ENCODE measurements at regions of chr1 and their contacts with region 1.

Region 1: GRCh38 chr1:62436466-62437256 is at the start of gene USP1:
- DNase-seq: peak; percentile 99
- ATAC-seq: peak; percentile 86
- H3K4me3 ChIP-seq: peak within 1 kb of the TSS; percentile 79
- H3K27ac ChIP-seq: peak within 1 kb of the TSS; percentile 99
- H3K4me1 ChIP-seq: peaks cover 14% of the 10 kb centered on the region
- H3K27me3 ChIP-seq: no peaks in the 10 kb centered on the region
- CTCF ChIP-seq: no peak
- total RNA-seq, gene USP1: 42.6 and 43.8 TPM in 2 replicates

Region 2: DNA sequence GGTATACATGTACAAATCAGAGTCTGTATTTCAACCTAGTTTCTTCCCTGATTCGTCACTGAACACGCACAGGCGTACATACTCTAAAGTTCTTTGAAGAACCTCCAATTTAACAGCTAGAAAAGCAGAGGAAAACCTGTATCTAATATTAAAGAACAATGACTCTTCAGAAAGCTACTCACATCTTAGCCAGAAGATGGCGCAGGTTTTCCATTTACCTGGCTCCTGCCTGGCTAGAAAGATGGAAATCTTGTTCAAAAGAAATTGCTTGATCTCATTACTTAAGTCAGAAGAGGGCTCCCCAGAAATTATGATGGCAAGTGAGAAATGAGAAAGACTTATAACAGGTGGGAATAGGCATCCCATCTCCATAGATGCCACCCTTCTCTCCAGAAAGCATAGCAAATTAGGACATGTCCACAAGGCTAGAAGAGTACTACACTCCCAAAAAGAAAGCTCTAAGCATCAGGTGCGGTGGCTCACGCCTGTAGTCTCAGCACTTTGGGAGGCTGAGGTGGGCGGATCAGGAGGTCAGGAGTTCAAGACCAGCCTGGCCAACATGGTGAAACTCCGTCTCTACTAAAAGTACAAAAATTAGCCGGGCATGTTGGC is 261.0 kb before region 1 on chr1:
- CTCF ChIA-PET with region 1: interaction called, 3 read pairs
- POLR2A ChIA-PET with region 1: interaction called, 23 read pairs
- intact Hi-C with region 1: loop called (anchors 1 kb)
- DNase-seq: peak; percentile 77
- ATAC-seq: peak; percentile 64
- H3K4me3 ChIP-seq: no peak overlapping the region
- H3K27ac ChIP-seq: no peak overlapping the region
- H3K4me1 ChIP-seq: peaks cover 7% of the 10 kb centered on the region; the same call in 1 of the 2 replicates
- H3K27me3 ChIP-seq: no peaks in the 10 kb centered on the region
- CTCF ChIP-seq: peak; percentile 88

Region 3: DNA sequence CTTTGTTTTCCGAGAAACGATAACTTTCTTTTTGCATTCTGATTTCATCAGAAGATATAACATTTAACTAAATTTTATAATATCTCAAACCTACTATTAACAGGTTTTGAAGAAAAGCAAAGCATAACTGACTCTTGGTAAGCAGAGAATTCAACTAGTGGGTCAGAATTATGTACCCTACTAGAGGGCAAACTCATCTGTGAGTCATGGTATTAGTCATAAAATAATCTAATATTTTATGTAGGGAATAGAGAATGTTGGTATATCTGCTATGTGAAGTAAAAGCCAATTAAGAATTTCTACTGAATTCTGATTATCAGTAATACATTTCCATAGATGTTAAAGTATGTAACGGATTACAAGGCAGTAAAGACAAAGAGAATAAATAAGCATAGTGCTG is 57.0 kb after region 1 on chr1:
- CTCF ChIA-PET with region 1: no interaction called
- POLR2A ChIA-PET with region 1: no interaction called
- intact Hi-C with region 1: loop called (anchors 5 kb)
- DNase-seq: peak; percentile 73
- ATAC-seq: peak; percentile 100
- H3K4me3 ChIP-seq: no peak overlapping the region
- H3K27ac ChIP-seq: no peak overlapping the region
- H3K4me1 ChIP-seq: peaks cover 14% of the 10 kb centered on the region
- H3K27me3 ChIP-seq: no peaks in the 10 kb centered on the region
- CTCF ChIP-seq: no peak

Region 4: DNA sequence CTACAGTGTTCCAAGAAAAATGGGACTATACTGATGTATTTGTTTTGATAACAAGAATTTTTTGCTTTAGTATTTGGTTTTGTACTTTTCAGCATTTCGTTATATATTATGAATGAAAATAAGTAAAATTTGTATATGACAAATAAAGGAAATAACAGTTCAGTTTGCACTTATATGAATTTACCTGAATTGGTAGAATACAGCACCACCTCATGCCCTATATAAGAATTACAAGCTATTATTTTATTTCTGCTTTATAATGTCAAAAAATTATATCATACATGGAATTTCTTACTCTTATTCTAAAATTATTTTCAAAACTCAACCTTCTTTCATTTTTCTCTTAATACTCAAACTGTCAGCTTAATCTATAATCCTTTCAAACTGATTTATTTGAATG is 1101.3 kb after region 1 on chr1:
- CTCF ChIA-PET with region 1: no interaction called
- POLR2A ChIA-PET with region 1: no interaction called
- intact Hi-C with region 1: no loop called
- DNase-seq: peak; percentile 38
- ATAC-seq: no peak
- H3K4me3 ChIP-seq: no peak overlapping the region
- H3K27ac ChIP-seq: no peak overlapping the region
- H3K4me1 ChIP-seq: no peaks in the 10 kb centered on the region
- H3K27me3 ChIP-seq: no peaks in the 10 kb centered on the region
- CTCF ChIP-seq: peak; percentile 72